Activated T-helper 1 cell treated with anti-CD3 and anti-CD28 coated beads, Interleukin-12 subunit alpha, Interleukin-12 subunit beta, Interleukin-2, Interleukin-4 antibody, amounts not matched to agents 30 ng/mL and 10 ng/mL and 1 ng/mL, durations not matched to agents 14 hours and 24 hours and 36 hours (primary cell): ENCODE measurements at regions of chr1 and their contacts with region 1.

Region 1: DNA sequence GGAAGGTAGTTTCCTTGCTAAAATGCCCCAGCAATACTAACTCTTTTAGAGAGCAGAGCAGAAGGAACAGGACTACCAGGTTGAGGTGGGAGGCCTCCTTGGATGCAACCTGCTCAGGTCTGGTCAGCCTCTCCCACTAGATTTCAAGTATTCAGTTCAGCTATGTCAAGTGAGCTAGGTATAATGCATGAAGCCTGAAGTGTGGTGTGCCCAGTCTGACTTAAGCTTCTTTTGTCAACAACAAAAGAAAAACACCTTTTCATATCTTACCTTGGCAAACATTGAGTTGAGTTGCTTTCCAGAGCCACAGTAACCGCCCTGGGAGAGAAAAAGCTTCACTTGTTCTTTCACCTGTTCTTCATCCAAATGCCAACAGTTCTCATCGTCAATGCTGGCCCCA is 47.8 kb downstream of the UROD start:
- DNase-seq: no peak
- H3K4me3 Mint-ChIP-seq: no peak overlapping the region
- H3K27ac Mint-ChIP-seq: no peak overlapping the region
- H3K4me1 Mint-ChIP-seq: no peaks in the 10 kb centered on the region
- H3K27me3 Mint-ChIP-seq: no peaks in the 10 kb centered on the region

Region 2: GRCh38 chr1:44985747-44986359 is 74.0 kb before region 1 on chr1:
- intact Hi-C with region 1: no loop called
- DNase-seq: no peak
- H3K4me3 Mint-ChIP-seq: peak overlapping the region; percentile 100
- H3K27ac Mint-ChIP-seq: peak overlapping the region; percentile 94
- H3K4me1 Mint-ChIP-seq: peaks cover 21% of the 10 kb centered on the region
- H3K27me3 Mint-ChIP-seq: peaks cover 2% of the 10 kb centered on the region

Region 3: DNA sequence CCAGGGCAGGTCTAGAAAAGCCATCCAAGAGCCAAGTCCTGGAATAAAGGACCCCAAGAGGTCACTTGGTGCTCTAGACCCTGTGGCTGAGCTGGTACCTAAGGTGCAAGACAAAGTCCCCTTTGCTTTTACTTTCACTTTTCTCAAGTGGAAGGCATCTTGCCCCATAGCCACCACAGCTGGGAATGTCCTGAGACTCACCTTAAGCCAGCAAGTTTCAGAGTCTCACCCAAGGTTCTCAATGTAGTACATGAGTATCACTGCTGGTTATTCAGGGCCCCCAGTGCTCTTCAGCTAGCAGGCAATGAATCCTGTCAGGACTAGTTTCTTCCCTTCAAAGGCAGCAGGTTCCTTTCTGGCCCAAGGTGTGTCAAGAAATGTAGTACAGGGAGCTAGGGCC is 19.7 kb after region 1 on chr1:
- intact Hi-C with region 1: loop called (anchors 1 kb)
- DNase-seq: no peak
- H3K4me3 Mint-ChIP-seq: no peak overlapping the region
- H3K27ac Mint-ChIP-seq: no peak overlapping the region
- H3K4me1 Mint-ChIP-seq: no peaks in the 10 kb centered on the region
- H3K27me3 Mint-ChIP-seq: peaks cover 14% of the 10 kb centered on the region

Region 4: GRCh38 chr1:45148209-45148825 is 88.5 kb after region 1 on chr1:
- intact Hi-C with region 1: no loop called
- DNase-seq: no peak
- H3K4me3 Mint-ChIP-seq: no peak overlapping the region
- H3K27ac Mint-ChIP-seq: no peak overlapping the region
- H3K4me1 Mint-ChIP-seq: no peaks in the 10 kb centered on the region
- H3K27me3 Mint-ChIP-seq: peaks cover 2% of the 10 kb centered on the region